Heart left ventricle (tissue), 16 donors: ENCODE measurements at regions of chr6 and their contacts with region 1.

Region 1: GRCh38 chr6:32666420-32667300 is at the start of gene HLA-DQB1:
- DNase-seq: peak in 2 of 5 donors; percentile 41 to 57
- ATAC-seq: peak; percentile 70 to 92 (median 88)
- H3K4me3 ChIP-seq: peak within 1 kb of the TSS in 9 of 12 donors; percentile 20 to 62 (median 37)
- H3K27ac ChIP-seq: peak within 1 kb of the TSS in 8 of 12 donors; percentile 59 to 81 (median 72)
- H3K4me1 ChIP-seq: peaks cover 0 to 10% (median 0%) of the 10 kb centered on the region in 12 donors
- H3K27me3 ChIP-seq: peaks cover 0 to 12% (median 0%) of the 10 kb centered on the region in 9 donors
- CTCF ChIP-seq: no peak
- POLR2A ChIP-seq: no peak
- total RNA-seq, gene HLA-DQB1: 0.38 to 86.5 (median 14.9) TPM

Region 2: GRCh38 chr6:32637219-32637880 is 29.3 kb before region 1 on chr6 and contains the start of gene HLA-DQA1:
- intact Hi-C with region 1: loop called in 1 of 10 experiments (anchors 1 kb)
- DNase-seq: peak in 2 of 5 donors; percentile 20 to 27
- ATAC-seq: peak in 3 of 4 donors; percentile 71 to 95 (median 71)
- H3K4me3 ChIP-seq: peak within 1 kb of the TSS in 9 of 12 donors; percentile 9 to 47 (median 37)
- H3K27ac ChIP-seq: peak within 1 kb of the TSS in 4 of 12 donors; percentile 37 to 63 (median 44)
- H3K4me1 ChIP-seq: no peaks in the 10 kb centered on the region
- H3K27me3 ChIP-seq: peaks cover 0 to 5% (median 0%) of the 10 kb centered on the region in 9 donors
- CTCF ChIP-seq: no peak
- POLR2A ChIP-seq: no peak
- total RNA-seq, gene HLA-DQA1: 1.2 to 154 (median 14.1) TPM in 8 of 9 donors, not detected in the other

Region 3: DNA sequence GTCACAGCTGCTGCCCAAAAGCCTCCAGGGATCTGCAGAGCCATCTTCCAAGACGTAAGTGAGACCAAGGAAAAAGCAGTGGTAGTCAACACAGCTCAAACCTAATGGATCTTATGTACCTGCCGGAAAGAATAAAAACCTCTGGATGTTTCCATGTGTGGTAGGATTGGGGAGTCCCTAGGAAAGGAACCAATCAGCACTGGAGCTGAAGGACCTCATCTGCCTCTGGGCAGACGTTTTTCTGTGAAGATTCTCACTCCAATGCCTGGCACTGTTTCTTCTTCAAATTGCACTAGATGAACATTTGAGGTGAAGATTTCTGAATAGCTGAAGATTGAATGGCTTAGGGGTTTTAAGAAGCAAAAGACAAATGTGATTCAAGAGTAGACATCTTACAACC is 96.8 kb after region 1 on chr6 and contains the start of gene HLA-DQB2:
- intact Hi-C with region 1: loop called in 3 of 10 experiments (anchors 2 to 5 kb)
- DNase-seq: no peak
- ATAC-seq: no peak
- H3K4me3 ChIP-seq: no peak within 1 kb of the TSS
- H3K27ac ChIP-seq: no peak within 1 kb of the TSS
- H3K4me1 ChIP-seq: no peaks in the 10 kb centered on the region
- H3K27me3 ChIP-seq: peaks cover 0 to 46% (median 14%) of the 10 kb centered on the region in 9 donors
- CTCF ChIP-seq: no peak
- POLR2A ChIP-seq: no peak
- total RNA-seq, gene HLA-DQB2: 0.55 to 26.4 (median 1.5) TPM in 6 of 9 donors, not detected in the others